ENCODE measurements at regions of chr12 and their contacts with region 1.

Region 1: GRCh38 chr12:122078141-122079032 is at the start of gene MLXIP:
- DNase-seq: peak; percentile 83 to 87 (median 85)
- H3K4me3 ChIP-seq: peak within 1 kb of the TSS; percentile 82 to 92
- H3K4me3 Mint-ChIP-seq: peak within 1 kb of the TSS; percentile 84 to 98 (median 95)
- H3K27ac ChIP-seq: peak within 1 kb of the TSS; percentile 69
- H3K27ac Mint-ChIP-seq: peak within 1 kb of the TSS; percentile 77 to 99 (median 95)
- H3K4me1 ChIP-seq: peaks cover 54% of the 10 kb centered on the region
- H3K4me1 Mint-ChIP-seq: peaks cover 26 to 46% (median 35%) of the 10 kb centered on the region in 4 donors
- H3K27me3 ChIP-seq: no peaks in the 10 kb centered on the region
- H3K27me3 Mint-ChIP-seq: no peaks in the 10 kb centered on the region
- total RNA-seq, gene MLXIP: 79.5 to 88.1 TPM

Region 2: DNA sequence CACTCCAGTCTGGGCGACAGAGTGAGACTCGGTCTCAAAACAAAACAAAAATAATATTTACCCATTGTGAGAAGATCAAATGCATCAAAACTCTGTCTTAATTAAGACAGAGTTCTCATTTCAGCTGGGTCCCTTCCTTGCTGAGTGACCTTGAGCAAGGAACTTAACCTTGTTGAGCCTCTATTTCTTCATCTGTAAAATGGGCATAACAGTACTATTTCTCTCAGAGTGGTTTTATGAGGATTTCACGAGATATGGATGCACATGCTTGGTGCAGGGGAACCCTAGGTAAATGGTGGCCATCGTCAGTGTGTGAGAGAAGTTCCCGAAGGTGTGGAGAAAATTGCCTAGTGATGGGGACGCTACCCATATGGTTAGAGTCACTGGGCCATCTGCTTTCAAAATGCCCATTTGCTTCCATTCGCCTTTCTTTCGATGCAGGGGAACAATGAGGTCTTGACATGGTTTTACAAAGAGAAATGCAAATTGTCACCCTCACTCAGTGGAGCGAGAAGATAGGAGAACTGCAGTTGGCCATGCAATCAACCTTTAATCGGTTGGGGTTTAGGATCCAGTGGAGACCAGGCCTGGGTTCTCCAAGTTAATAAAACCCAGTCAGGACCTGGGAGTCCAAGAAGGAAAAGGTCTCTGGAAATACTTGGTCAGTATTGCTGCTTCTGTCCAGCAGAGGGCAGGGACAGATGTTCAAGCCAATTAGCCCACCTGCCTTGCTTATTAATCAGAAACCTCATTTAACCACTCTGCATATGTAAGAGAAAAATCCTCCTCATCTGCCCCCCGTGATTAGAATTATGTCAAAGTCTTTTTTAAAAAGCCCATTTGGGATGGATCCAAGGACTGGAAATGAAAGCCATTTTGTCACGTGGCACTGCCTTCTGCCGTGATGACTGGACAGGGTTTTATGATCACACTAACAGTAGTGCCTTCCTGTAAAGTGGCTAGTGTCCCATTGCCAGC is 122.8 kb before region 1 on chr12:
- CTCF ChIA-PET with region 1: no interaction called
- POLR2A ChIA-PET with region 1: no interaction called
- intact Hi-C with region 1: no loop called
- DNase-seq: no peak
- H3K4me3 ChIP-seq: no peak overlapping the region
- H3K4me3 Mint-ChIP-seq: no peak overlapping the region
- H3K27ac ChIP-seq: no peak overlapping the region
- H3K27ac Mint-ChIP-seq: no peak overlapping the region
- H3K4me1 ChIP-seq: no peaks in the 10 kb centered on the region
- H3K4me1 Mint-ChIP-seq: no peaks in the 10 kb centered on the region
- H3K27me3 ChIP-seq: no peaks in the 10 kb centered on the region
- H3K27me3 Mint-ChIP-seq: peaks cover 3% of the 10 kb centered on the region in 2 donors

Region 3: GRCh38 chr12:121980191-121980891 is 98.0 kb before region 1 on chr12:
- CTCF ChIA-PET with region 1: no interaction called
- POLR2A ChIA-PET with region 1: no interaction called
- intact Hi-C with region 1: no loop called
- DNase-seq: no peak
- H3K4me3 ChIP-seq: no peak overlapping the region
- H3K4me3 Mint-ChIP-seq: no peak overlapping the region
- H3K27ac ChIP-seq: no peak overlapping the region
- H3K27ac Mint-ChIP-seq: peak overlapping the region in 1 of 7 donors; percentile 29
- H3K4me1 ChIP-seq: peaks cover 3% of the 10 kb centered on the region
- H3K4me1 Mint-ChIP-seq: peaks cover 0 to 3% (median 0%) of the 10 kb centered on the region in 4 donors
- H3K27me3 ChIP-seq: no peaks in the 10 kb centered on the region
- H3K27me3 Mint-ChIP-seq: peaks cover 1% of the 10 kb centered on the region in 2 donors

Region 4: GRCh38 chr12:122090759-122091515 is 12.6 kb after region 1 on chr12:
- CTCF ChIA-PET with region 1: interaction called, 11 read pairs
- POLR2A ChIA-PET with region 1: interaction called, 53 read pairs
- intact Hi-C with region 1: loop called (anchors 1 kb)
- DNase-seq: no peak
- H3K4me3 ChIP-seq: no peak overlapping the region
- H3K4me3 Mint-ChIP-seq: peak overlapping the region in 3 of 8 donors; percentile 14 to 57 (median 55)
- H3K27ac ChIP-seq: no peak overlapping the region
- H3K27ac Mint-ChIP-seq: peak overlapping the region in 6 of 7 donors; percentile 1 to 85 (median 80)
- H3K4me1 ChIP-seq: peaks cover 84% of the 10 kb centered on the region
- H3K4me1 Mint-ChIP-seq: peaks cover 27 to 45% (median 37%) of the 10 kb centered on the region in 4 donors
- H3K27me3 ChIP-seq: no peaks in the 10 kb centered on the region
- H3K27me3 Mint-ChIP-seq: no peaks in the 10 kb centered on the region

Region 5: DNA sequence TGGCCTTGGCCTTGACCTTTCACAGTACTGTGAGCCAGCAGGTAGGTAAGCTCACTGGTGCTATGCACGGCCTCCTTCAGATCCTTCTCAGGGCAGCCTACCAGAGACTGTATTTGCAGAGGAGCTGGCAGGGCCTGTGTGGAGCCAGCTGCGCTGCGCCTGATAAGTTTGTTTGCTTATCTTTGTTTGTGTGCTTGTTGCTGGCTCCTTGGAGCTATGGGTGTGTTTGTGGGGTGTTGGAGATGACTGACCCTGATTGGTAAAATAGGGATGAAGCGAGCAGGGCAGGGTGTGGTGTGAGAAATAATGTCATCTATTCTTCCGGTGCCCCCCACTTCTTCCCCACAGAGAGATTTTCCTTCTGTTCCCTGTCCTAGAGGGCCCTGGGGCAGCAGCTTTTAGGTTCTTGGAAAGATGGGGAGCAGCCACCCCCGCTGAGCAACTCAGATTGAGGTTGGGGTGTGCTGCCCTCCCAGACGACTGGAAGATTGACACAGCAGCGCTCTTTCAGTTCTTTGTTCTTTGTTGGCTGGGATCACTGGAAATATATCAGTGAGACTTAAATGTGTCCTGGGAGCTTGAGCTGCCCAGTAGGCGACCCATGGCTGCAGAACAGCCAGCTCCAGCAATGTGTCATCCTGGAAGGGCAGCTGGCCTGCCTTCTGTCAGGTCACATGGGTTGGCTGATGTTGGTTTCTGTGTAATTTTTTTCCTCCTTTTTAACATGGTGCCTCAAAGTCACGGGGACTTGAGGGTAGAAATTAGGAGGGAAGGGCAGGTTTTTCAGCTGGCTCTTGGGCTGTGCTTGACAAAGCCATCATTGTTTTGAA is 19.8 kb after region 1 on chr12:
- CTCF ChIA-PET with region 1: interaction called, 4 read pairs
- POLR2A ChIA-PET with region 1: interaction called, 32 read pairs
- intact Hi-C with region 1: loop called (anchors 2 kb)
- DNase-seq: no peak
- H3K4me3 ChIP-seq: no peak overlapping the region
- H3K4me3 Mint-ChIP-seq: peak overlapping the region in 4 of 8 donors; percentile 21 to 59 (median 46)
- H3K27ac ChIP-seq: no peak overlapping the region
- H3K27ac Mint-ChIP-seq: peak overlapping the region; percentile 75 to 93 (median 88)
- H3K4me1 ChIP-seq: peaks cover 78% of the 10 kb centered on the region
- H3K4me1 Mint-ChIP-seq: peaks cover 41 to 68% (median 57%) of the 10 kb centered on the region in 4 donors
- H3K27me3 ChIP-seq: no peaks in the 10 kb centered on the region
- H3K27me3 Mint-ChIP-seq: no peaks in the 10 kb centered on the region

Measured in CD4-positive, alpha-beta memory T cell (primary cell).